HAP-1 (cell line): ENCODE measurements at regions of chr17 and their contacts with region 1.

Region 1: GRCh38 chr17:79789534-79790353 is 7.1 kb downstream of the CBX8 start:
- DNase-seq: peak; percentile 59 to 84
- H3K4me3 ChIP-seq: peak overlapping the region; percentile 17
- H3K4me1 ChIP-seq: peaks cover 19% of the 10 kb centered on the region
- H3K27me3 ChIP-seq: no peaks in the 10 kb centered on the region

Region 2: DNA sequence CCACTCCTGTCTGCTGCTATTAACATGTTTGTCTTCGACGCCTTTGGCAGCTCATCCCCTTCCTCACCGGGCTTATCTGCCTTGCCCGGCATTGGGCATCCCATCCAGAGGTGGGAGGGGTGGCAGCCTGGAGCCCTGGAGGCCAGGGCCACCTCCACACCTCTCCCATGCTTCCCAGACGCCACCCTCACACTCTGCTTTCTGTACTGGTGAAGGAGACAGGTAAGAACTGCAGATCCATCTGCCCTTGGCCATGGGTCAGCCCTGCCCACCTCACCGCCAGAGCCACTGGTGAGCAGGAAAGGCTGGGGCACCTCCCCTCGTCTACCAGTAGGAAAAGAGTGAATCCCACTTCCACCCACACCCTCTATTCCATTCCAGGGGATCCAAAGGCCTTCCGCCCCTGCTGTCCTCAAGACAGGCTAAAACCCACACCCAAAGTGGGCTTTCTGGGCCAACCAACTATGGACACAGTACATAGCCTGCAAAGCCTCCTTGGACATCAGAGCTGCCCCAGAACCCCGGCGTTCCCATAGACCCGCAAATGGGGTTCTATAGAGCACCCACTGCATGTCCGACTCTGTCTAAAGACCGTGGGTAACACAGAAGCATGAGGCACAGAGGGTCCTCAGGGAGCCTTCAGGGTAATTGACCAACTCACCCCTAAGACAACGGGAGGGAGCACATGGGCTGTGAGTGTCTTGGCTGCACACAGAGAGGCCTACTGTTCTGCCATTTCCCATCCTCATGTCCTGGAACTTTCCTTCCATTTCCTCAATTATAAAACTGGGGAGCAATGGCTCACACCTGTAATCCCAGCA is 155.5 kb before region 1 on chr17:
- in situ Hi-C with region 1: no loop called
- DNase-seq: no peak
- H3K4me3 ChIP-seq: no peak overlapping the region
- H3K4me1 ChIP-seq: no peaks in the 10 kb centered on the region
- H3K27me3 ChIP-seq: peaks cover 19% of the 10 kb centered on the region

Region 3: DNA sequence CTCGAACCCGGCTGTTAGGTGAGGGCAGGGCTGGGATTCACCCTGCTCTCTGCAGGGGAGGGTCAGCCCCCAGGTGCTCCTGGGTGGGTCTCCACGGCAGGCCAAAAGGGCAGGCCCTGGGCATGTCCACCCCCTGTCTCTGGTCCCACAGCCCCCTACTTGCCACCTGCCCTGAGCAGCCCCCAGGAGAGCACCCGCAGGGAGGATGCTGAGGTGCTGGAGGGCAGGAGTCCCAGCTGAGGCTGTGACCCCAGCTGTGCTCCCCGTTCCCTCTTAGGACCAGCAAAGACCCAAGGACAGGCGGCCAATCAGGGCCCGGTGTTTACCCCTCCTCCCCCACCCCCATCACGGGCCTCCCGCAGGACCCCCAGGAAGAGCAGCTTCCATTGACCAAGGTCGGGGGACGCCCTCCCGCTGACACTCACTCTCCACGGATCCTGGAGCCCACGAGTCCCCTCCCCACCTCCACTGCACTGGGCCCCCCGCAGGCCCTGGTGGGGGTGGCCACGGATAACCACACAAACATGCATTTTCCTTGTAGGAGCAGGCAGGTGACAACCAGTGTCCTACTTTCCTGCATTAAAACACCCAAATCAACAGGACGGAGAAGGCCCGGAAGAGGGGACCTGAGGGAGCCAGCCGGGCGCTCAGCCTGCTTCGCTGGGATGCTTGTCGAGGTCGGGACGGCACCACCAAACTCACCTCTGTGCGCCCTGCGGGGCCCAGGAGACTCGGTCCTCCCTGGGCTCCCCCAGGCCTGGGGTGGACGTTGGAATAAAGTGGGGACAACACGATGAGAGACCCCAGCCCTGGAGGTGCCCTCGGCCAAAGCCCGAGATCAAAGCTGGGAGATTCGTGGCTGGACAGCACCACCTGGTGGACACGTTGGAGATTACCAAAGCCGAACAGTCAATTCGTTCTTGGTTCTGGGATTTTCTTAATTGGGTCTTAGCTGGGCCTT is 81.5 kb before region 1 on chr17:
- in situ Hi-C with region 1: no loop called
- DNase-seq: peak; percentile 46 to 76
- H3K4me3 ChIP-seq: no peak overlapping the region
- H3K4me1 ChIP-seq: no peaks in the 10 kb centered on the region
- H3K27me3 ChIP-seq: no peaks in the 10 kb centered on the region

Region 4: GRCh38 chr17:79915850-79916430 is 126.2 kb after region 1 on chr17:
- in situ Hi-C with region 1: loop called (anchors 10 kb)
- DNase-seq: peak in 1 of 2 experiments; percentile 54
- H3K4me3 ChIP-seq: no peak overlapping the region
- H3K4me1 ChIP-seq: no peaks in the 10 kb centered on the region
- H3K27me3 ChIP-seq: no peaks in the 10 kb centered on the region

Region 5: GRCh38 chr17:79991140-79991923 is 201.6 kb after region 1 on chr17:
- in situ Hi-C with region 1: loop called (anchors 10 kb)
- DNase-seq: peak; percentile 59 to 90
- H3K4me3 ChIP-seq: no peak overlapping the region
- H3K4me1 ChIP-seq: peaks cover 24% of the 10 kb centered on the region
- H3K27me3 ChIP-seq: no peaks in the 10 kb centered on the region

Region 6: DNA sequence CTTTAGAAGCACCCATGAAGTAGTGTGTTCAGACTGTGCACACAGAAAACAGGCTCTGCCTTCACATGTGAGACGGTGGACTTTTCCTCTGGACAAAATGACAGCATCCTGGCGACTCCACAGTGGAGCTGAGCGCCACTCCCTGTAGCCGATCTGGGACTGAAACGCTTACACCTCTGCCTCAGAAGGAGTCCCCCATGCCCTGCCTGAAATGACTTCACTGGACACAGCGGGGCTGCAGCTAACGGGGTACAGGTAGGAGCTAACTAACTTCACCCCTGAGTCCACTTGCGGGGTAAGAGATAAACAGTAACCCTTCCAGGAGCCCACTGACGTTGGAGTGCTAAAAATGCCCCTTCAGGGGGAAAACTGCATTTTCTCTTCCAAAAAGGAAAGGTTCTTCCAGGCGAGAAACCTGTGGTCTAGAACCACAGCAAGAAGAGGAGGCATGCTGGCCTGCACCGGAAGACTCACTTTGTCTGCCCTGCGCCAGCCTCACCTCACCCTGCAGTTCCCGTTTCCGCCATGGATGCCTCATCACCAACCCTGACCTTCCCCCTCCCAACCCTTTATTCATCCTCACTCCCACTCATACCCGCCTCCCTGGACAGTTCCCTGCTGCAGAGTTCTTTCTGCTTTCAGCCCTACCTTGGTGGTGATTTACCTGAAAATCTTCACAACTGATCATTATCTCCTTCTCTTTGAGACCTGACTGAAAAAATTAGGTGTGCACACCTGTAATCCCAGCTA is 605.8 kb after region 1 on chr17:
- in situ Hi-C with region 1: no loop called
- DNase-seq: no peak
- H3K4me3 ChIP-seq: no peak overlapping the region
- H3K4me1 ChIP-seq: no peaks in the 10 kb centered on the region; the same call in 1 of the 2 replicates
- H3K27me3 ChIP-seq: no peaks in the 10 kb centered on the region